ENCODE measurements at regions of chr10 and their contacts with region 1.

Region 1: GRCh38 chr10:117216611-117217195 is 19.4 kb downstream of the KCNK18 start:
- DNase-seq: peak; percentile 55 to 86 (median 65)
- ATAC-seq: peak; percentile 26 to 92 (median 86)
- H3K4me3 ChIP-seq: peak overlapping the region in 11 of 12 donors; percentile 9 to 57 (median 42)
- H3K27ac ChIP-seq: no peak overlapping the region
- H3K4me1 ChIP-seq: peaks cover 0 to 13% (median 8%) of the 10 kb centered on the region in 12 donors
- H3K27me3 ChIP-seq: peaks cover 19 to 58% (median 27%) of the 10 kb centered on the region in 9 donors
- CTCF ChIP-seq: peak; percentile 99 to 100 (median 100)
- POLR2A ChIP-seq: no peak

Region 2: DNA sequence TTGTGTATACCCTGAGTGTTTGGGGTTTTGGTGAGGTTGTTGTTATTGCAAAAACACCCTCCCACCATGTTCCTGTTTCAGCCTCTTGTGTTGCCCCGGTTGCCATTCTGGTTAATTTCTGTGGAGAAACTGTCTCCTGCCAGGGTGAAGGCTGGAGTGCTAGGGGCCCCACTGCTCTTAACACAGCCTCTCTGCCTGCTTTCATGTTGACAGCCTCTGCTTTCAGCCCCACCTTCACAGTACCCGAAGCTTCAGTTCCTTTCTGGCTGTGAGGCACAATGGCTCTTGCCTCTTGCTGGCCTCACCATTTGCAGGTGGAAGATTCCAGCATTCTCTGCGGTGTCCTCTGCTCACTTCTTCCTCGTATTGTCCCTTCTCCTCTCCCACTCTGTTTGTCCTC is 43.4 kb after region 1 on chr10:
- intact Hi-C with region 1: no loop called
- DNase-seq: no peak
- ATAC-seq: no peak
- H3K4me3 ChIP-seq: no peak overlapping the region
- H3K27ac ChIP-seq: no peak overlapping the region
- H3K4me1 ChIP-seq: no peaks in the 10 kb centered on the region
- H3K27me3 ChIP-seq: peaks cover 0 to 58% (median 12%) of the 10 kb centered on the region in 9 donors
- CTCF ChIP-seq: no peak
- POLR2A ChIP-seq: no peak

Region 3: GRCh38 chr10:117320050-117320665 is 103.5 kb after region 1 on chr10:
- intact Hi-C with region 1: loop called in 9 of 10 experiments (anchors 1 to 10 kb)
- DNase-seq: no peak
- ATAC-seq: no peak
- H3K4me3 ChIP-seq: no peak overlapping the region
- H3K27ac ChIP-seq: no peak overlapping the region
- H3K4me1 ChIP-seq: peaks cover 0 to 5% (median 0%) of the 10 kb centered on the region in 12 donors
- H3K27me3 ChIP-seq: no peaks in the 10 kb centered on the region
- CTCF ChIP-seq: peak in 11 of 12 donors; percentile 17 to 61 (median 46)
- POLR2A ChIP-seq: no peak

Region 4: GRCh38 chr10:117375360-117376178 is 158.9 kb after region 1 on chr10 and contains the start of gene PDZD8:
- intact Hi-C with region 1: loop called in 1 of 10 experiments (anchors 2 kb)
- DNase-seq: peak; percentile 95 to 98 (median 97)
- ATAC-seq: peak; percentile 95 to 98 (median 98)
- H3K4me3 ChIP-seq: peak within 1 kb of the TSS; percentile 68 to 99 (median 92)
- H3K27ac ChIP-seq: peak within 1 kb of the TSS; percentile 62 to 99 (median 94)
- H3K4me1 ChIP-seq: peaks cover 0 to 44% (median 30%) of the 10 kb centered on the region in 12 donors
- H3K27me3 ChIP-seq: peaks cover 0 to 11% (median 0%) of the 10 kb centered on the region in 9 donors
- CTCF ChIP-seq: peak in 3 of 12 donors; percentile 2 to 13 (median 3)
- POLR2A ChIP-seq: peak; percentile 44 to 84
- total RNA-seq, gene PDZD8: 19.1 to 37.2 (median 26.1) TPM

Region 5: GRCh38 chr10:117442944-117443685 is 226.4 kb after region 1 on chr10:
- intact Hi-C with region 1: loop called in 3 of 10 experiments (anchors 10 kb)
- DNase-seq: peak; percentile 68 to 81 (median 72)
- ATAC-seq: peak; percentile 68 to 86 (median 78)
- H3K4me3 ChIP-seq: peak overlapping the region in 7 of 12 donors; percentile 4 to 39 (median 30)
- H3K27ac ChIP-seq: peak overlapping the region in 1 of 12 donors; percentile 51
- H3K4me1 ChIP-seq: peaks cover 0 to 15% (median 0%) of the 10 kb centered on the region in 12 donors
- H3K27me3 ChIP-seq: peaks cover 0 to 17% (median 0%) of the 10 kb centered on the region in 9 donors
- CTCF ChIP-seq: peak; percentile 72 to 91 (median 84)
- POLR2A ChIP-seq: no peak

Region 6: GRCh38 chr10:118246332-118247203 is 1029.9 kb after region 1 on chr10:
- intact Hi-C with region 1: loop called in 3 of 10 experiments (anchors 5 to 10 kb)
- DNase-seq: no peak
- ATAC-seq: no peak
- H3K4me3 ChIP-seq: no peak overlapping the region
- H3K27ac ChIP-seq: no peak overlapping the region
- H3K4me1 ChIP-seq: no peaks in the 10 kb centered on the region
- H3K27me3 ChIP-seq: peaks cover 11 to 89% (median 52%) of the 10 kb centered on the region in 9 donors
- CTCF ChIP-seq: no peak
- POLR2A ChIP-seq: no peak